ENCODE measurements at regions of chr6 and their contacts with region 1.

Region 1: GRCh38 chr6:26204332-26205165 is 117.3 kb downstream of the HFE start:
- DNase-seq: peak; percentile 98
- H3K4me3 Mint-ChIP-seq: no peak overlapping the region
- H3K27ac Mint-ChIP-seq: no peak overlapping the region
- H3K4me1 Mint-ChIP-seq: peaks cover 3% of the 10 kb centered on the region
- H3K27me3 Mint-ChIP-seq: no peaks in the 10 kb centered on the region
- CTCF ChIP-seq: no peak

Region 2: DNA sequence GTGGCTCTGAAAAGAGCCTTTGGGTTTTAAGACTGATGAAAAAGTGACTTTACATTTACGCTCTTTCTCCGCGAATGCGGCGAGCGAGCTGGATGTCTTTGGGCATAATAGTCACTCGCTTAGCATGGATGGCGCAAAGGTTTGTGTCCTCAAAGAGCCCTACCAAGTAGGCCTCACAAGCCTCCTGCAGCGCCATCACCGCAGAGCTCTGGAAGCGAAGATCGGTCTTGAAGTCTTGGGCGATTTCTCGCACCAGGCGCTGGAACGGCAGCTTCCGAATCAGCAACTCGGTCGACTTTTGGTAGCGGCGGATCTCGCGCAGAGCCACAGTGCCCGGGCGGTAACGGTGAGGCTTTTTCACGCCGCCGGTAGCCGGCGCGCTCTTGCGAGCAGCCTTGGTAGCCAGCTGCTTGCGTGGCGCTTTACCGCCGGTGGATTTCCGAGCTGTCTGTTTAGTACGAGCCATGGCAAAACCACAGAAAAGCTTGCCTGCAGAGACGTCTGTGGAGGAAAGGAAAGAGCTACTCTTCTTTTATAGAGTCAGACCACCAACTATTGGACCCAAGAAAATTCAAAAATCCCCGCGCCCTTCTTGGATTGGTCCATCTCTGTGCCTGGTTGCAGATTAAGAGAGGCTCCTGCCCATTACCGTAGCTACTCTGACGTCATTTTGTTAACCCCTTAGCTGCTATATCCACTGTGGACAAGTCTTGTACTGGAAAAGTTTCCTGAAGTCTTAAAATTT is 172.8 kb before region 1 on chr6:
- CTCF ChIA-PET with region 1: interaction called, 4 read pairs
- POLR2A ChIA-PET with region 1: interaction called, 238 read pairs
- intact Hi-C with region 1: loop called (anchors 2 kb)
- DNase-seq: peak; percentile 99
- H3K4me3 Mint-ChIP-seq: peak overlapping the region; percentile 81
- H3K27ac Mint-ChIP-seq: peak overlapping the region; percentile 97
- H3K4me1 Mint-ChIP-seq: peaks cover 25% of the 10 kb centered on the region
- H3K27me3 Mint-ChIP-seq: no peaks in the 10 kb centered on the region
- CTCF ChIP-seq: peak; percentile 12

Region 3: DNA sequence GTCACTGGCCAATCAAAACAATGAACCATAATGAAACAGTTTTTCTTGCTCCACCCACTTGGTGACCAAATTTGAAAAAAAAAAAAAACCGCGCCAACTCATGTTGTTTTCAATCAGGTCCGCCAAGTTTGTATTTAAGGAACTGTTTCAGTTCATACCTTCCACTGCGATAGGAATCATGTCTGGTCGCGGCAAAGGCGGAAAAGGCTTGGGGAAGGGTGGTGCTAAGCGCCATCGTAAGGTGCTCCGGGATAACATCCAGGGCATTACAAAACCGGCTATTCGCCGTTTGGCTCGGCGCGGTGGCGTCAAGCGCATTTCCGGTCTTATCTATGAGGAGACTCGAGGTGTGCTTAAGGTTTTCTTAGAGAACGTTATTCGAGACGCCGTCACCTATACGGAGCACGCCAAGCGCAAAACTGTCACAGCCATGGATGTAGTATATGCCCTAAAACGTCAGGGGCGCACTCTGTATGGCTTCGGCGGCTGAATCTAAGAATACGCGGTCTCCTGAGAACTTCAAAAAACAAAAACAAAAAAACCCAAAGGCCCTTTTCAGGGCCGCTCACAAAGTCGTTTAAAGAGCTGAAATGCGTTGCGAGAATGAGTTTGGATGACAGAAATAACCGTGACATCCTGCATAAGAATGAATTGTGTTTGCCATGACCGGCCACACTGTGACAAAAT is 100.6 kb before region 1 on chr6:
- CTCF ChIA-PET with region 1: no interaction called
- POLR2A ChIA-PET with region 1: interaction called, 72 read pairs
- intact Hi-C with region 1: no loop called
- DNase-seq: peak; percentile 96
- H3K4me3 Mint-ChIP-seq: peak overlapping the region; percentile 75
- H3K27ac Mint-ChIP-seq: peak overlapping the region; percentile 92
- H3K4me1 Mint-ChIP-seq: peaks cover 11% of the 10 kb centered on the region
- H3K27me3 Mint-ChIP-seq: no peaks in the 10 kb centered on the region
- CTCF ChIP-seq: peak; percentile 41

Region 4: GRCh38 chr6:26223650-26224546 is 19.3 kb after region 1 on chr6:
- CTCF ChIA-PET with region 1: interaction called, 5 read pairs
- POLR2A ChIA-PET with region 1: interaction called, 189 read pairs
- intact Hi-C with region 1: no loop called
- DNase-seq: peak; percentile 91
- H3K4me3 Mint-ChIP-seq: no peak overlapping the region
- H3K27ac Mint-ChIP-seq: no peak overlapping the region
- H3K4me1 Mint-ChIP-seq: peaks cover 6% of the 10 kb centered on the region
- H3K27me3 Mint-ChIP-seq: no peaks in the 10 kb centered on the region
- CTCF ChIP-seq: no peak

Region 5: DNA sequence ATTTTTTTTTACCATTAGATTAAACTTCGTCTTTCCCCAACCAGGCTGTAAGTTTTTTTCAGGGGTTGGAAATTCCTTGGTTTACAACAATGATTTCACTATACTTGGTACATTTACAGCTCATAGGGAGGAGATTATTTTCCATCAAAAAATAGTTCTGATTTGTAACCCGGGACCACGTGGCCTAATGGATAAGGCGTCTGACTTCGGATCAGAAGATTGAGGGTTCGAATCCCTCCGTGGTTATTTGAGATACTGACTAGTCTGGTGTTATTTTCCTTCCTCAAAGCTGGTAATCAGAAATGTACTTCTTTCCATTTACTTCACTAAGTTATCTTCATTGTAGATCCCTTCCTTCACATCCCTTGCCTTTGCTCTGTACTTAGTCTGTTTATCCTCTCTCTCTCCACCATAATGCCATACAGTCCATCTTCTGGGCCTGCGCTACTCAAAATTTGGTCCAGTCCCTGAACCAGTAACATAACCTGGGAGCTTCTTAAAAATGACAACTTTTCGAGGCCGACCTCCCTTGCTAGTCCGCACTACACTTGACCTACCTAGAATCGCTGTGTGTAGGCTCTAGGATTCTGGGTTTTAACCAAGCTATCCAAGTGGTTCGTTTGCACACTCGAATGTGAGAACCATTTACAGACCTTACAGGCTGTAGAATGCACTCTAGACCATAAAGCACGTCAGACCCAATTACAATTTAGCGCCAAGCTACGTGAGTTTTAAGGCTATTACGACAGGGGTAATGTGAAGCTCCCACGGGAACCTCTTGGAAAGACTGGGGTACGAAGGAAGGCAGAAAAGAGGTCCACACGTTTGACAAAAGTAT is 118.3 kb after region 1 on chr6:
- CTCF ChIA-PET with region 1: no interaction called
- POLR2A ChIA-PET with region 1: interaction called, 21 read pairs
- intact Hi-C with region 1: no loop called
- DNase-seq: peak; percentile 85
- H3K4me3 Mint-ChIP-seq: peak overlapping the region; percentile 76
- H3K27ac Mint-ChIP-seq: peak overlapping the region; percentile 75
- H3K4me1 Mint-ChIP-seq: peaks cover 7% of the 10 kb centered on the region
- H3K27me3 Mint-ChIP-seq: no peaks in the 10 kb centered on the region
- CTCF ChIP-seq: no peak

Region 6: GRCh38 chr6:27838058-27838944 is 1633.8 kb after region 1 on chr6:
- CTCF ChIA-PET with region 1: no interaction called
- POLR2A ChIA-PET with region 1: interaction called, 147 read pairs
- intact Hi-C with region 1: no loop called
- DNase-seq: peak; percentile 98
- H3K4me3 Mint-ChIP-seq: no peak overlapping the region
- H3K27ac Mint-ChIP-seq: no peak overlapping the region
- H3K4me1 Mint-ChIP-seq: peaks cover 32% of the 10 kb centered on the region
- H3K27me3 Mint-ChIP-seq: no peaks in the 10 kb centered on the region
- CTCF ChIP-seq: no peak